ENCODE measurements at regions of chr17 and their contacts with region 1.

Region 1: GRCh38 chr17:491086-492021 is 138.7 kb upstream of the RPH3AL start:
- DNase-seq: peak in 7 of 10 donors; percentile 12 to 63 (median 46)
- ATAC-seq: peak in 1 of 2 donors; percentile 8
- H3K4me3 Mint-ChIP-seq: peak overlapping the region; percentile 57 to 87 (median 73)
- H3K27ac Mint-ChIP-seq: peak overlapping the region in 8 of 10 donors; percentile 38 to 96 (median 72)
- H3K4me1 Mint-ChIP-seq: peaks cover 11 to 40% (median 31%) of the 10 kb centered on the region in 4 donors
- H3K27me3 Mint-ChIP-seq: no peaks in the 10 kb centered on the region

Region 2: GRCh38 chr17:409848-410545 is 81.4 kb before region 1 on chr17:
- POLR2A ChIA-PET with region 1: interaction called, 46 read pairs
- DNase-seq: peak; percentile 96 to 100 (median 99)
- ATAC-seq: peak; percentile 22 to 55
- H3K4me3 Mint-ChIP-seq: peak overlapping the region; percentile 85 to 99 (median 93)
- H3K27ac Mint-ChIP-seq: peak overlapping the region; percentile 94 to 99 (median 97)
- H3K4me1 Mint-ChIP-seq: peaks cover 48 to 60% (median 55%) of the 10 kb centered on the region in 4 donors
- H3K27me3 Mint-ChIP-seq: peaks cover 0 to 7% (median 0%) of the 10 kb centered on the region in 5 donors

Region 3: GRCh38 chr17:416293-417206 is 74.8 kb before region 1 on chr17:
- POLR2A ChIA-PET with region 1: interaction called, 46 read pairs
- DNase-seq: peak in 5 of 10 donors; percentile 26 to 53 (median 49)
- ATAC-seq: peak; percentile 28 to 30
- H3K4me3 Mint-ChIP-seq: peak overlapping the region; percentile 73 to 92 (median 87)
- H3K27ac Mint-ChIP-seq: peak overlapping the region; percentile 83 to 99 (median 96)
- H3K4me1 Mint-ChIP-seq: peaks cover 49 to 88% (median 82%) of the 10 kb centered on the region in 4 donors
- H3K27me3 Mint-ChIP-seq: no peaks in the 10 kb centered on the region

Region 4: GRCh38 chr17:444879-445454 is 46.4 kb before region 1 on chr17:
- POLR2A ChIA-PET with region 1: interaction called, 12 read pairs
- DNase-seq: no peak
- ATAC-seq: no peak
- H3K4me3 Mint-ChIP-seq: peak overlapping the region in 2 of 10 donors; percentile 6 to 45
- H3K27ac Mint-ChIP-seq: peak overlapping the region in 6 of 10 donors; percentile 3 to 74 (median 20)
- H3K4me1 Mint-ChIP-seq: peaks cover 15 to 48% (median 19%) of the 10 kb centered on the region in 4 donors
- H3K27me3 Mint-ChIP-seq: no peaks in the 10 kb centered on the region

Region 5: DNA sequence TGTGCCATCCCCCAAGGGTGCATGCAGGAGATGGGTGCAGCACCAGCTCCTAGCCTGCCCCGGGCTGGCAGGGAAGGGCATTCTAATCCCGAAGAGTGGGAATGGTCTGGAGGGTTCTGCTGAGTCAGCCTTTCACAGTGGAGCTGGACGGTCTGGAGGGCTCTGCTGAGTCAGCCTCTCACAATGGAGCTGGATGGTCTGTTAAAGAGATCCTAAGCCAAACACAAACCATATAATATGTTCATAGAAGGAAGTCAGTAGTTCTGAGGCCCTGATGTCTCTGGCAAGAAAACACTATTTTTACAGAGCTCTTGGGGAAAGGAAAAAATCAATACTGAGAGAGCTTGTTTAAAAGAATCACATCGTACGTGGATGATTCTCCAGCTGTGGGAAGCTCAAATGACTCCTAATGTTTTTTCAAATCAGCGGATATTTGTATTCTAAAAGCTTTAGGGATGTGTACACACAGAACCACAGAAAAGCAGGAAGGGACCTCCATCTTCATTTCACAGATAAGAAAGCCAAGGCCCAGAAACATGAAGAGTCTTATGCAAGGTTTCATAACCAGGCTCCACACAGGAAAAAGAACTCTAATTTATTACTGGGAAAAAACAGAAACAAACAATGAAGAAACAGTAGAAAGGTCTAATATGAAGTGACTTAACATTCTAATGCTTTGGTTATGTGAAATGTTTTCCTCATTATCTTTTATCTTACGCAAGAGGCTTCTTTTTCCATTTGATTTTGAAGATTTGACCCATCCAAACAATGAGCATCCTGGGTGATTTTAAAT is 47.0 kb after region 1 on chr17:
- POLR2A ChIA-PET with region 1: no interaction called
- DNase-seq: no peak
- ATAC-seq: no peak
- H3K4me3 Mint-ChIP-seq: no peak overlapping the region
- H3K27ac Mint-ChIP-seq: peak overlapping the region in 1 of 10 donors; percentile 43
- H3K4me1 Mint-ChIP-seq: peaks cover 12 to 17% (median 15%) of the 10 kb centered on the region in 4 donors
- H3K27me3 Mint-ChIP-seq: no peaks in the 10 kb centered on the region

Region 6: DNA sequence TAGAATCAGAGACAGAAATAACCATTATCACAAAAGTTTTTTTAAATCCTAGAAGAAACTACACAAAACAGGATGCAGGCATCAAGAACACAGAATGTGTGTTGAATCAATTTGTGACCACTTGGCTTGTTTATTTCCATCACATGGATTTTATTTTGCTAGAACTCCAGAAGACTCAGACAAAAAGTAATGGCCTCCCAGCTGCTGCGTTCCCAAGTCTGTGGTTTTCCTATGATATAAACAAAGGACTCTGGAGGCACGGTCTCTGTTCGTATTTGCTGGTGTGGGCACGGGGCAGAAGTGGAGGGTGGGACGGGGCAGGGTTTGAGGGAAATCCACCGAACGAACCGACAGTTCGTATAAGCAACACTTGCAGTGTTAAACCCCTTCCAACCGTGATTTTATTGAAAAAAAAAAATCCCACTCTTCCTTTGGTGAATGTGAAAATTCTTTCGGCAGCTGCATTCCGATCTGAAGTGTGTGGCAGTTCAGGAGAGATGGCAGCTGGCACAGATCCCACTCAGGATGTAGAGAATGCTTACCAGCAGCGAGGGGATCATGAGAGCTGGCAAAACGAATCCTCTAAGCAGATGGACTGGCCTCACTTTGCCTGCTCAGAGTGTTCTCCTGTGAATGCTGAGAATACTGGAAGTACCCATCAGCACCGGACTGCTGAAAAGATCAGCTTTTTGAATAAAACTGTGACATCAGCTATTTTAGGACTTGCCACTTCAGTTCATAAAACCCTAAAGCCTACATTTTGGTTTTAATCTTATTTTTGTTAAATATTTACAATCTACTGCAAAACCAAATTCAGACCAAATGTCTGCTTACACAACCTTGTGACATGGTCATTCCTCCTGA is 58.1 kb after region 1 on chr17:
- POLR2A ChIA-PET with region 1: no interaction called
- DNase-seq: no peak
- ATAC-seq: no peak
- H3K4me3 Mint-ChIP-seq: no peak overlapping the region
- H3K27ac Mint-ChIP-seq: peak overlapping the region in 2 of 10 donors; percentile 33 to 61
- H3K4me1 Mint-ChIP-seq: no peaks in the 10 kb centered on the region
- H3K27me3 Mint-ChIP-seq: no peaks in the 10 kb centered on the region

Measured in naive thymus-derived CD8-positive, alpha-beta T cell (primary cell).